ENCODE measurements at regions of chr22 and their contacts with region 1.

Region 1: DNA sequence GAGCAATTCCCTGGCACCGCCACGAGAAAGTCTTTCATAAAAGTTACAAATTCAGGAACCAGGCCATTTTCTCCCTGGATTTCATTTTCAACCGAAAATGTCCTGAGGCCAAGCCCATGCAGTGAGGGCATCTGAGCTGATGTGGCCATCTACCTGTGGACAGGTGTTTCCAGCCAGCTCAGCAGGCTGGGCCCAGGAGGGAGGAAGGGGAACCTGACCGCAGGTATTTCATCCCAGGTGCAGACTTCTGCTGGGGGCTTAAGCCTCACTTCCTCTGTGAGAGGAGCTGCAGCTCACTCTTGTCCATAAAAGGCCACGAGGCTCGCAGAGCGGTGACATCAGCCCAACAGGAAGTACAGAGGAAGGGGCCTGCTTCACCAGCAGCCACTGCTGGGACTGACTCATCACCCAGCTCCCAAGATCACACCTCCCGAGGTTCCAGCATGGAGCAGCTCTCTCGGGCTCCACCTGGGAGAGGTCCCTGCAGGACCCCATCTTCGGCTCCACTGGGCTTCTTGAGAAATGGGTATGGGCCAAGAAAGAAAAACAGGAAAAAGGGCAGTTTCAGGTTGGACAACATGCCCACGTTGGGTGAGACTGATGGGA is 56.4 kb downstream of the MYH9 start:
- DNase-seq: peak; percentile 88 to 97 (median 94)
- H3K4me3 ChIP-seq: peak overlapping the region in 1 of 3 experiments; percentile 52
- H3K4me3 Mint-ChIP-seq: peak overlapping the region; percentile 63 to 88
- H3K27ac ChIP-seq: peak overlapping the region; percentile 89 to 92
- H3K27ac Mint-ChIP-seq: peak overlapping the region; percentile 96 to 99 (median 99)
- H3K4me1 ChIP-seq: peaks cover 74 to 79% of the 10 kb centered on the region in 2 donors
- H3K4me1 Mint-ChIP-seq: peaks cover 84% of the 10 kb centered on the region
- H3K27me3 ChIP-seq: no peaks in the 10 kb centered on the region
- H3K27me3 Mint-ChIP-seq: no peaks in the 10 kb centered on the region
- CTCF ChIP-seq: no peak

Region 2: DNA sequence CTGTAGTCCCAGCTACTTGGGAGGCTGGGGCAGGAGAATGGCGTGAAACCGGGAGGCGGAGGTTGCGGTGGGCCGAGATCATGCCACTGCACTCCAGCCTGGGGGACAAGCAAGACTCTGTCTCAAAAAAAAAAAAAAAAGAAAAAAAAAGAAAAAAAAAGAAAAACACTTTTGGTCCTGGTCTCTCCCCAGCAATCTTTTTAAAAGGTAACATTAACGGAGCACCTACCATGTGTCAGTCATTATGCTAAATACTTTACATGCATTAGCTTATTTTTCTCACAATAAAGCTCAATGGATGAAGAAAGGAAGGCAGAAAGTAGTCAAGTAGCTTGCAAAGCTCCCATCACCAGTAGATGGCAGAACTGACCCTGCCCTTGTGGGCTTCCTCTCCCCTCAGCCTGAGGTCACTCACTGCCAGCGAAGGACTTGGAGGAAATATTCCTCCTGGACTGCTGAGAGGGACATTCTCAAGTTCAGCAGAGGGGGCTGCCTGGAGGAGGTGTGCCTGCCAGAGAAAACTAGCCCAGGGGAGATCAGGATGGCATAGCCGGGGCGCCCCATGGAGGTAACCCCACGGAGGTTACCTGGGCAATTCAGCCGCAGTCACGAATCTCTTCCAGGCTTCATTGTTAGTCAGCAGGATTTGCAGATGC is 186.4 kb before region 1 on chr22:
- intact Hi-C with region 1: no loop called
- DNase-seq: peak; percentile 25 to 64 (median 57)
- H3K4me3 ChIP-seq: no peak overlapping the region
- H3K4me3 Mint-ChIP-seq: no peak overlapping the region
- H3K27ac ChIP-seq: no peak overlapping the region
- H3K27ac Mint-ChIP-seq: peak overlapping the region in 3 of 7 donors; percentile 59 to 75 (median 64)
- H3K4me1 ChIP-seq: peaks cover 15% of the 10 kb centered on the region in 2 donors
- H3K4me1 Mint-ChIP-seq: peaks cover 29% of the 10 kb centered on the region
- H3K27me3 ChIP-seq: no peaks in the 10 kb centered on the region
- H3K27me3 Mint-ChIP-seq: peaks cover 0 to 1% (median 0%) of the 10 kb centered on the region in 3 donors
- CTCF ChIP-seq: peak; percentile 70

Region 3: DNA sequence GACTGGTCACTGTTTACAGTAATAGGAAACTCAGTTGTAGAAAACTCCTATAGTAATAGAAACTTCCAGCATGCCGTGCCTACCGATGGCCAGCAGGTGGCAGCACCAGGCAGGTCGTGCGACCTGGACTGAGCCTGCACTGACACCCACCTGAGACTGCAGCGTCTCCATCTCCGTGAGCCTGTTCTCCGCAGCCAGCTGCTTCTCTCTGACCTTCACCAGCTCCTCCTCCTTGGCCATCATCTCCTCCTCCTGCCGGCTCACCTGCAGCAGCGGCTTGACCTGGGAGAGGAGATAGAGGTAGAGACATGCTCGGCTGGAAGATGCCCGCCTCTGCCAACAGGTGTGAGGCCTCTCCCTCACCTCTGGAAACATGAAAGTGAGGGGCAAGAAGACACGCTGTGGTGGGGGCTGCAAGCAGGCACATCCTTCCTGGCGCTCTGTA is 30.0 kb before region 1 on chr22:
- intact Hi-C with region 1: no loop called
- DNase-seq: peak; percentile 53 to 66 (median 59)
- H3K4me3 ChIP-seq: no peak overlapping the region
- H3K4me3 Mint-ChIP-seq: no peak overlapping the region
- H3K27ac ChIP-seq: peak overlapping the region in 1 of 2 donors; percentile 53
- H3K27ac Mint-ChIP-seq: peak overlapping the region in 2 of 7 donors; percentile 8 to 20
- H3K4me1 ChIP-seq: no peaks in the 10 kb centered on the region
- H3K4me1 Mint-ChIP-seq: no peaks in the 10 kb centered on the region
- H3K27me3 ChIP-seq: no peaks in the 10 kb centered on the region
- H3K27me3 Mint-ChIP-seq: no peaks in the 10 kb centered on the region
- CTCF ChIP-seq: peak; percentile 94

Region 4: GRCh38 chr22:36356708-36357694 is 25.6 kb after region 1 on chr22:
- intact Hi-C with region 1: loop called in 1 of 2 experiments (anchors 2 kb)
- DNase-seq: peak; percentile 66 to 89 (median 74)
- H3K4me3 ChIP-seq: no peak overlapping the region
- H3K4me3 Mint-ChIP-seq: peak overlapping the region in 1 of 2 donors; percentile 71
- H3K27ac ChIP-seq: peak overlapping the region; percentile 73 to 81
- H3K27ac Mint-ChIP-seq: peak overlapping the region; percentile 83 to 94 (median 90)
- H3K4me1 ChIP-seq: peaks cover 68 to 87% of the 10 kb centered on the region in 2 donors
- H3K4me1 Mint-ChIP-seq: peaks cover 82% of the 10 kb centered on the region
- H3K27me3 ChIP-seq: no peaks in the 10 kb centered on the region
- H3K27me3 Mint-ChIP-seq: no peaks in the 10 kb centered on the region
- CTCF ChIP-seq: no peak

Region 5: DNA sequence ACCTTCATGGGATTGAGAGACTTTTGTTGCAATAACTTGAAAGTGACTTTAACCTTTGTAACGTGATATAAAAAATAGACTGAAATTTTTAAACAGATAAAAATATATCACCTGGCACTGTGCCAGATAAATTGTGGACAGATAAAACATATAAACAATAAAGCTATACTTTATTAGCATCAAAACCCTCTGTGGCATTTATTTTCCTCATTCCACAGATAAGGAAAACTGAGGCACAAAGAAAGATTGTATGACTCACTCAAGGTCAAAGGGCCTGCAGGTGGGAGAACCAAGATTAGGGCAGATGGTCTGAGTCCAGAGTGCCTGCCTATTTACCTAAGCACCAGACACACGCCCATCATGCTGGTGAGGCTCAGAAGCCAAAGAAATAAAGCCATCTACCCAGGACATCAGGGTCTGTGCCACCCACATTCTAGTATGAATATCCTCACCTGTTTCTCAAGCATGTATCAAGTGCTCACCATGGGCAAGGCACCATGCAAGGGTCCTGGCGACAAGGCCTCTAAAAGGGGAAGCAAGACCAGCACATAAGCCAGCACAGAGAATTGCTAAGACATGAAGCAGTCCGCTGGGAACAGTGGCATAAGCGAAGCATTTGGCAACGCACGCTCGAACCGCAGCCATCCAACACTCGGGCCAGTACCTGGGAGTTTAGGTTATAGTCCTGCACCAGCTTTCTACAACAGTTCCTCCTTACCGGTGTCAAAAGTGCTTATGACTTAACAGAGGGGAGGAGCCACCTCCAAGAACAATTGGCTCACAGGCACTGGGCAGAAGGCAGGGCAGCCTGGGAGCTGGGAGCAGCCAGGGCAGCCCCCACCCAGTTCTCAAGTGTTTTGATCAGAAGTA is 38.7 kb after region 1 on chr22:
- intact Hi-C with region 1: loop called (anchors 5 kb)
- DNase-seq: peak; percentile 66 to 76 (median 73)
- H3K4me3 ChIP-seq: peak overlapping the region in 1 of 3 experiments; percentile 45
- H3K4me3 Mint-ChIP-seq: peak overlapping the region; percentile 42 to 64
- H3K27ac ChIP-seq: peak overlapping the region; percentile 88 to 95
- H3K27ac Mint-ChIP-seq: peak overlapping the region; percentile 92 to 97 (median 97)
- H3K4me1 ChIP-seq: peaks cover 97 to 100% of the 10 kb centered on the region in 2 donors
- H3K4me1 Mint-ChIP-seq: peaks cover 96% of the 10 kb centered on the region
- H3K27me3 ChIP-seq: no peaks in the 10 kb centered on the region
- H3K27me3 Mint-ChIP-seq: peaks cover 0 to 2% (median 0%) of the 10 kb centered on the region in 3 donors
- CTCF ChIP-seq: no peak

Region 6: GRCh38 chr22:36454916-36455570 is 123.6 kb after region 1 on chr22:
- intact Hi-C with region 1: loop called (anchors 5 kb)
- DNase-seq: peak; percentile 63 to 84 (median 77)
- H3K4me3 ChIP-seq: peak overlapping the region; percentile 28 to 85 (median 48)
- H3K4me3 Mint-ChIP-seq: peak overlapping the region; percentile 70 to 71
- H3K27ac ChIP-seq: peak overlapping the region; percentile 37 to 67
- H3K27ac Mint-ChIP-seq: peak overlapping the region; percentile 18 to 90 (median 76)
- H3K4me1 ChIP-seq: peaks cover 67 to 75% of the 10 kb centered on the region in 2 donors
- H3K4me1 Mint-ChIP-seq: peaks cover 58% of the 10 kb centered on the region
- H3K27me3 ChIP-seq: no peaks in the 10 kb centered on the region
- H3K27me3 Mint-ChIP-seq: peaks cover 0 to 2% (median under 1%) of the 10 kb centered on the region in 3 donors
- CTCF ChIP-seq: no peak

Region 7: DNA sequence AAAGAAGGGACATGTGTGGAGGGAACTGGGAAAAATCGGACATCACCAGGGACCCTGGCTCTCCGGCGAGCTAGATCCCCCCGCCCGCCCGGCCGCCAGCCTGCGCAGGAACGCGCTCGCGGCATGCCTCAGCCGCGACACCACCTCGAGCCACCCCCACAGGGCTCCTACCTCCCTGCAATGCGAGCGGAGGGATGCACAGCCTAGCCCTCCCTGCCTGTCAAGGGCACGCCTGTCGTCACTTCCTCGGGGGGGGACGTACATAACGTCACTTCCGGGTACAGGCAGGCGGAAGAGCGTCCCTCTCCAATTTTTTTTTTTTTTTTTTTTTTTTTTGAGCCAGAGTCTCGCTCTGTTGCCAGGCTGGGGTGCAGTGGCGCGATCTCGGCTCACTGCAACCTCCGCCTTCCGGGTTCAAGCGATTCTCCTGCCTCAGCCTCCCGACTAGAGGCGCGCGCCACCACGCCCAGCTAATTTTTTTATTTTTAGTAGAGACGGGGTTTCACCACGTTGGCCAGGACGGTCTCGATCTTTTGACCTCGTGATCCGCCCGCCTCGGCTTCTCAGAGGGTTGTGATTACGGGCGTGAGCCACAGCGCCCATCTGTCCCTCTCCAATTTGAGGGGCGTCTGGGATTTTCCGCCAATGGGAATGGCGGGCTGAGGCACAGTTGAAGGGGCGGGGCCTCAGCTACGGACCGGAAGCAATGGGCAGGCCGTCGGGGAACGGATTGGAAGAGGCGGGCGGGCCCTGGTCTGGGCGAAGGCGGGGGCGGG is 150.2 kb after region 1 on chr22 and contains the start of gene TXN2:
- intact Hi-C with region 1: no loop called
- DNase-seq: peak; percentile 94 to 96 (median 95)
- H3K4me3 ChIP-seq: peak within 1 kb of the TSS; percentile 79 to 88 (median 84)
- H3K4me3 Mint-ChIP-seq: peak within 1 kb of the TSS; percentile 87 to 93
- H3K27ac ChIP-seq: peak within 1 kb of the TSS; percentile 94 to 96
- H3K27ac Mint-ChIP-seq: peak within 1 kb of the TSS; percentile 98 to 100 (median 99)
- H3K4me1 ChIP-seq: peaks cover 14 to 20% of the 10 kb centered on the region in 2 donors
- H3K4me1 Mint-ChIP-seq: peaks cover 10% of the 10 kb centered on the region
- H3K27me3 ChIP-seq: no peaks in the 10 kb centered on the region
- H3K27me3 Mint-ChIP-seq: peaks cover 0 to 3% (median 0%) of the 10 kb centered on the region in 3 donors
- CTCF ChIP-seq: no peak
- polyA plus RNA-seq, gene TXN2: 79.8 to 141 (median 140) TPM

Region 8: DNA sequence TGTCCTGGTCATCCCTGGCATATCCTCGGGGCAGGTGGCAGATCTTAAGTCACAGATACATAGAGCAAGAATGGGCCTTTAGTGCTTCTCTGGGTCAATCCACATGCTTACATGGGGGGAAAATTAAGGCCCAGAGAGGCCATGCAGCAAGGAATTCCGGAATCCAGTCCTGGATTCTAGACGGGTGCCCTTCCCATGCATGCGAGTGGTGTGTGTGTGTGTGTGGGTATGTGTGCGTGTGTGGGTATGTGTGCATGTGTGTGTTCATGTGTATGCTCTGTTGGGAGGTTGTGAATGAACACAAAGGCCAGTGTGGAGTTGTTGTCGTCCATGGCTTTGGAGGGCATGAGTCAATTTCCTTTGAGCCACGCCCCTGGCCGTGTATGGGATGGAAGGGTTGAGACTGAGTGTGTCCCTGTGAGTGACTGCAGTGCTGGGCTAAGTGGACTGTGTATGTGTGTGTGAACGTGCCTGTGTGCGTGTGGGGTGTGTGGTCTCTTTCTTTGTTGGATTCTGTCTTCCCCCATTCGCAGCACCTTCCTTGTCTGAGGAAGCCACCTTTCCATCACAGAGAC is 230.9 kb after region 1 on chr22:
- intact Hi-C with region 1: no loop called
- DNase-seq: peak; percentile 13 to 44 (median 23)
- H3K4me3 ChIP-seq: no peak overlapping the region
- H3K4me3 Mint-ChIP-seq: peak overlapping the region in 1 of 2 donors; percentile 65
- H3K27ac ChIP-seq: no peak overlapping the region
- H3K27ac Mint-ChIP-seq: no peak overlapping the region
- H3K4me1 ChIP-seq: peaks cover 14 to 17% of the 10 kb centered on the region in 2 donors
- H3K4me1 Mint-ChIP-seq: peaks cover 16% of the 10 kb centered on the region
- H3K27me3 ChIP-seq: peaks cover 0 to 20% of the 10 kb centered on the region in 2 donors
- H3K27me3 Mint-ChIP-seq: peaks cover 5 to 42% (median 36%) of the 10 kb centered on the region in 3 donors
- CTCF ChIP-seq: no peak

Measured in CD14-positive monocyte (primary cell).